CD14-positive monocyte (primary cell): ENCODE measurements at regions of chr12 and their contacts with region 1.

Region 1: GRCh38 chr12:110023059-110023606 is 23.9 kb downstream of the ANKRD13A start:
- DNase-seq: no peak
- H3K4me3 ChIP-seq: no peak overlapping the region
- H3K4me3 Mint-ChIP-seq: no peak overlapping the region
- H3K27ac ChIP-seq: peak overlapping the region in 1 of 2 donors; percentile 29
- H3K27ac Mint-ChIP-seq: peak overlapping the region in 3 of 7 donors; percentile 18 to 63 (median 43)
- H3K4me1 ChIP-seq: no peaks in the 10 kb centered on the region
- H3K4me1 Mint-ChIP-seq: peaks cover 8% of the 10 kb centered on the region
- H3K27me3 ChIP-seq: no peaks in the 10 kb centered on the region
- H3K27me3 Mint-ChIP-seq: peaks cover 0 to 2% (median 0%) of the 10 kb centered on the region in 3 donors
- CTCF ChIP-seq: no peak

Region 2: GRCh38 chr12:109987615-109988014 is 35.5 kb before region 1 on chr12:
- intact Hi-C with region 1: loop called (anchors 5 kb)
- DNase-seq: no peak
- H3K4me3 ChIP-seq: no peak overlapping the region
- H3K4me3 Mint-ChIP-seq: no peak overlapping the region
- H3K27ac ChIP-seq: no peak overlapping the region
- H3K27ac Mint-ChIP-seq: peak overlapping the region in 1 of 7 donors; percentile 63
- H3K4me1 ChIP-seq: peaks cover 0 to 1% of the 10 kb centered on the region in 2 donors
- H3K4me1 Mint-ChIP-seq: peaks cover 2% of the 10 kb centered on the region
- H3K27me3 ChIP-seq: no peaks in the 10 kb centered on the region
- H3K27me3 Mint-ChIP-seq: no peaks in the 10 kb centered on the region
- CTCF ChIP-seq: no peak

Region 3: DNA sequence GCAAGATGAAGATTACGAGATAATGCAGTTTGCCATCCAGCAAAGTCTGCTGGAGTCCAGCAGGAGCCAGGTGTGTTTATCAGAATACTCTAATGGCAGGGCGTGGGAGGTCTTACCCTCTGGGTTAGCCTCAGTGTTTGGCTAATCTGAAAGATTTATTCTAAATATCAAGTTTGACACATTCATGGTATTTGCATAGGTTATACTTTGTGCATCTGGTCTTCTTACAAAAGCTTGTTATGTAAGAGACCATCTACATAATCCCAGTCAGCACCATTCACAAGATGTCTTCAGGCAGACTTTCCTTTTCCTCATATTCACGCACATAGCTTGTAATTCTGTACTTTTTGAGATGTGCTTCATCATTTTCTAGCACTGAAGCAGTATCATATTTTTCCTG is 10.8 kb after region 1 on chr12:
- intact Hi-C with region 1: loop called in 1 of 2 experiments (anchors 1 kb)
- DNase-seq: no peak
- H3K4me3 ChIP-seq: no peak overlapping the region
- H3K4me3 Mint-ChIP-seq: no peak overlapping the region
- H3K27ac ChIP-seq: no peak overlapping the region
- H3K27ac Mint-ChIP-seq: no peak overlapping the region
- H3K4me1 ChIP-seq: peaks cover 0 to under 1% of the 10 kb centered on the region in 2 donors
- H3K4me1 Mint-ChIP-seq: peaks cover 3% of the 10 kb centered on the region
- H3K27me3 ChIP-seq: no peaks in the 10 kb centered on the region
- H3K27me3 Mint-ChIP-seq: no peaks in the 10 kb centered on the region
- CTCF ChIP-seq: no peak

Region 4: GRCh38 chr12:110088936-110089335 is 65.8 kb after region 1 on chr12:
- intact Hi-C with region 1: no loop called
- DNase-seq: peak; percentile 59 to 84 (median 84)
- H3K4me3 ChIP-seq: peak overlapping the region in 2 of 3 experiments; percentile 4 to 52
- H3K4me3 Mint-ChIP-seq: peak overlapping the region in 1 of 2 donors; percentile 63
- H3K27ac ChIP-seq: peak overlapping the region; percentile 68 to 72
- H3K27ac Mint-ChIP-seq: peak overlapping the region; percentile 78 to 93 (median 91)
- H3K4me1 ChIP-seq: peaks cover 53 to 57% of the 10 kb centered on the region in 2 donors
- H3K4me1 Mint-ChIP-seq: peaks cover 49% of the 10 kb centered on the region
- H3K27me3 ChIP-seq: no peaks in the 10 kb centered on the region
- H3K27me3 Mint-ChIP-seq: peaks cover 0 to 7% (median 4%) of the 10 kb centered on the region in 3 donors
- CTCF ChIP-seq: no peak